Posterior vena cava (tissue), 2 donors: ENCODE measurements at regions of chr15 and their contacts with region 1.

Region 1: DNA sequence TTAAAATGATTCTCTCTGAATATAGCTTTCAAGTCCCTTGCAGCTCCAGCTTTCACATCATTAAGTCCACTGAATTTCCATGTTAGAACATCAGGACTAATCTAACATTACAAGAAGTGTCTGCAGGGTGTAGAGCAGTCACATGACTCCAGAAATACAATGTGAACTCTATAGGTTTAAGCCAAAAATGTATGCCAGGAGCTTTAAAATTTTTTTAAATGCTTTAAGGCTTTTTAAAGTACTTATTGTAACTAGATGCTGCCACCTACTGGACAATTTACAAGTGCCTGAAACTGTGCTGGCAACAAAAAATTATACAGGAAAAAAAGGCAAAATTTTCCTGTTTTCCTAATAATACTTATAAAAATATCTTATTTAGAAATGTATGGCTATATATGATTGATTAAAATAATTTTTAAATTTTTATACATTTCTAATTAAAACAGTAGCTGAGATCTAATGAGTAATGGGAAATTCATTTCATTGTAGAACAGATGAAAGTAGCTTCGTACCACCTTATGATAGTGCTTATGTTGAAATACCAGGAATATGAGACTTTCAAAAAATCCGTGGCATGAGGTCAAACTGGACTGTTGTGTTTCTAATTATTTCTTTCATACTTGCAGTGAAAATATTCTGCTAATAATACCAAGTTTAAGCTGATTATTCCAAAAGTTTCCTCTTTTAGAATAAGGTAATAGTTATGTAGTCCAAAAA is 25.7 kb downstream of the FSIP1 start:
- DNase-seq: no peak

Region 2: DNA sequence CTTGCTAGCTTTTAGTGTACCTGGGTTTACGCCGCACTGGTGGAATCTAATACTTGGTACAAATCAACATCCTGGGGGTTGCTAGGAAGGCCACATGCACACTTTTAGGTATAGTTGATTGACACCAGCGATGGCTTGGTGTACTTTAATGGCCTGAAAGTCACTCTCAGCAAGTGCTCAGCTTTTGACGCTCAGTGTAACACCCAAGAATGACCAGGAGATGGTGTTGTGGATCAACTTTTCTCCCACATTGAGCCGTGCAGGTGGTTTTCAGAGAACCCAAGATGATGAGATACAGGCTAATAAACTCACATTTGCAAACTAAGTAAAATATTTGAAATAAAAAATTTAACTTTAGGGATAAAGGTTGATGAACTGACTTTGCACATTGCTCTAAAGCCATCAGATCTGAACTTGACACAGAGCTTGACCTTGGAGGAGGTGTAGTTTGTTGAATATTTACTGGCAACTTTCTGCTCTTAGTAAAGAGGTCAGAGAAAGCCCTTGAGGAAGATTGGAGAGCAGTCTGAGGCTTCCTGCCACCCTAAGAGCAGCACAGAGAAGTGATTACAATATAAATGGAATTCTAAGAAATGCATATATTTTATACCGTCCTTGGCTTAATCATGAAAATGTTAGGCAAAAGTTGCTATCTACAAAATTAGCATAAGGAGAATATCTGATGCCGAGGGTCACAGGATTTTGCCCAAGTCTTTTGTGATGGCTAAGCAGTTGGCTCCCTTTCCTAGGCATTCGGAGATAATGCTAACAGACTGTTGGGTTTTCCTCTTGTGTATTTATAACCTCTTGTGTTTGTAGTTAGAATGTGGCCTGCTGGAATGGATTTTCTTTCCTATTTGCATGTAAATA is 1048.9 kb before region 1 on chr15:
- intact Hi-C with region 1: loop called (anchors 5 kb)
- DNase-seq: no peak

Region 3: DNA sequence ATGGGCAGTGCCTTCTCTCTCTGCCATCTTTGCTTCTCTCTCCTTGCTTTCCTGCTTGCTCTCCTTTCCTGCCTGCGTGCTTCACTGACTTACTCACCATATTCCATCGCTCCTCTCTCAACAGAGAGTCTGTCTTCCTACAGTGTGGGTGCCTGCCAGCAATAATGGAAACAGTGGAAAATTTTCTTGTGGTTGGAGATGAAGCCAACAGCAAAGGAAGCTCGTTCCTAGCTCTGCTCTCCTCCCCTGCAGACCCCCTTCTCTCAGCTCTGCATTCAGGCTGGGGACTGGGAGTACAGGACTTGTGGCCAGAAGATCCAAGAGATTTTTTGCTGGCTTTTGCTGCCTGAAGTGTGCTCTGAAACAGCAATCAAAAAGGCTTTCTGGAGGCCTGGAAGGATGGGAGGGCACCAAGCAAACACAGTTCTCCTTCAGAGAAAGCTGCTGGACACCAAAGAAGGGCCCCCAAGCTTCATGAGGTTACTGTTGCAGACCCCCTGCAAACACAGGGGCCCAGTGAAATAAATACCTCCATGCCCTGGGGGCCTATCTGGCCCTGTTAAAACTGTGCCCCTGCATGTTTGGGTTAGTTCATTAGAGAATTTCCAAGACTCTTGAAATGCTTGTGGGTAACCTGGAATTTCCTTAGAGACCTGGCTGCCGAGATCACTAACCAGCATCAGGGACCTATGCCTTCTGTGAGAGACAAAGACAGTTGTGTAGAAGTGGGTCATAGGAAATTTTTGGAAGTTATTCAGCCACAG is 1042.5 kb before region 1 on chr15:
- intact Hi-C with region 1: loop called (anchors 5 kb)
- DNase-seq: no peak

Region 4: DNA sequence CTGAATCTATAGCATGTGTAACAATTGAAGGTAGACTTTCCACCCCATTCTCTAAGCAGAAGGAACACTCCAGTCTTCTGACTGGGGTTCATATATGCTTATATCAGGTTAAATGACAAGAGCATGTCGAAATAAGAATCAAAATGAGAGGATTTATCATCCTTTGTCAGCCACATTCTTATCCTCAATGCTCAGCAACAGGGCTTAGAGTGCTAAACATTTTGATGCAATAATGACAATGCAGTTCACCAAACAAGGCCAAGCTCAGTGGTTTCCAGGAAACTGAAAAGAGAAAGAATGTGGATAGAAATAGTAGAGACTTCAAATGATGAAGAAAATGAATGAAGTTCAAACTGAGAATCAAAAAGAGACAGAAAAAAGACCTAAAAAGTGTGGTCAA is 52.3 kb before region 1 on chr15:
- intact Hi-C with region 1: loop called in 1 of 2 experiments (anchors 10 kb)
- DNase-seq: no peak